ENCODE measurements at regions of chr6 and their contacts with region 1.

Region 1: DNA sequence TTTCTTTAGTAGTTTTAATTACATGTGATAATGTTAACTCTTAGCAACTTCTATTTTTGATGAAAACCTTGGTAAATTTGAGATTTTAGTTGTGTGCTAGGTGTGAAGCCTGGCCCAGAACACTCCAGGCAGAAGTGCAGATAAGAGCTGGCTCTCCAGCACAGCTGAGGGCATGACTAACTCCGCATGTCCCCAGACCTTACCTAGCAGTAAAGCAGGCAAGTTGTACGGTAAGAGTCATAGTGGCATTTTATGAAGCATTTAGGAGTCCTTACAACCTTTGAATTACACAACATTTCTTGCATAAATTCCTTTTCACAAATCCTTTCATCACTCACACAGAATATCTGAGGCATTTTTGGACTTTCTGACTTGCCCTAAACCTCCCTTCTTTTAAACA is 67.2 kb downstream of the OPRM1 start:
- DNase-seq: no peak
- H3K4me3 ChIP-seq: no peak overlapping the region
- H3K27ac ChIP-seq: no peak overlapping the region
- H3K4me1 ChIP-seq: no peaks in the 10 kb centered on the region
- CTCF ChIP-seq: no peak

Region 2: GRCh38 chr6:153781306-153781705 is 324.9 kb before region 1 on chr6:
- CTCF ChIA-PET with region 1: no interaction called
- POLR2A ChIA-PET with region 1: no interaction called
- intact Hi-C with region 1: no loop called
- DNase-seq: no peak
- H3K4me3 ChIP-seq: no peak overlapping the region
- H3K27ac ChIP-seq: no peak overlapping the region
- H3K4me1 ChIP-seq: no peaks in the 10 kb centered on the region
- CTCF ChIP-seq: no peak

Region 3: DNA sequence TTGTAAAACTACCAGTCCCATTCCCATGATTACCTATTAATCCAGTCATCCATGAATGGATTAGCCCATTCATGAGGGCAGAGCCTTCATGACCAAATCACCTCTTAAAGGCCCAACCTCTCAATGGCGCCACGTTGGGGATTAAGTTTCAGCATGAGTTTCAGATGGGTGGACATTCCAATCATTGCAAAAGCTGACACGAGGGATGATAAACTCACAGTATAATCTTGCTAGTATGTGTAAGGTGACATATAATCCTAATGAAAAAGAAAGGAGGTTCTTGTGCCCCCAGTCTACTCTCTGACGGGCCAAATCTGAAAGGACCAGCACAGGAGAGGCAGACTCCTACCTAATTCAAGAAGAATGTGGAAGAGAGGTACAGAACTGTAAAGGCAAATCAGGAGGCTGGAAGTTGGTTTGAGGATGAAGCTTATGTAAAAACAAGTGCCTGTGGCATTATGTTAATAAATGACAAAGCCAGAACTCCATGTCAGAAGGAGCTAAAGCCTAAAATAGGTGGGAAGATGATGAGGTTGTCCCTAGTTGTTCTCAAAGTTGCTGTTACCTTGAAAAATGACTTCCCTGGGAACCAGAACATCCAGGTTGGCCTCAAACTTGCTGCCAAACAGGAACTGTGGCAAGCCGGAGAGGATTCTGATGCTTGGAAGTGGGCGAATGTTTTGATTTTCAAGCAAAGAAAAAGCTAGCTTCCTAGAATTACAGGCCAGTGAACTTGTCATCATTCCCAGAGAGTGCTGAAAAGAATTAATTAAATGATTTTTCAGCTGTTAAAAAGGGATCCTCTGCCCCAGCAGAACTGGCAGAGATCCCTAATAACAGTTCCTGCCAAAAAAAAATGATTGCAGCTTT is 782.4 kb after region 1 on chr6:
- CTCF ChIA-PET with region 1: no interaction called
- POLR2A ChIA-PET with region 1: interaction called, 14 read pairs
- intact Hi-C with region 1: no loop called
- DNase-seq: no peak
- H3K4me3 ChIP-seq: no peak overlapping the region
- H3K27ac ChIP-seq: no peak overlapping the region
- H3K4me1 ChIP-seq: no peaks in the 10 kb centered on the region
- CTCF ChIP-seq: no peak

Measured in OCI-LY7 (cell line).